ENCODE measurements at regions of chr10 and their contacts with region 1.

Region 1: DNA sequence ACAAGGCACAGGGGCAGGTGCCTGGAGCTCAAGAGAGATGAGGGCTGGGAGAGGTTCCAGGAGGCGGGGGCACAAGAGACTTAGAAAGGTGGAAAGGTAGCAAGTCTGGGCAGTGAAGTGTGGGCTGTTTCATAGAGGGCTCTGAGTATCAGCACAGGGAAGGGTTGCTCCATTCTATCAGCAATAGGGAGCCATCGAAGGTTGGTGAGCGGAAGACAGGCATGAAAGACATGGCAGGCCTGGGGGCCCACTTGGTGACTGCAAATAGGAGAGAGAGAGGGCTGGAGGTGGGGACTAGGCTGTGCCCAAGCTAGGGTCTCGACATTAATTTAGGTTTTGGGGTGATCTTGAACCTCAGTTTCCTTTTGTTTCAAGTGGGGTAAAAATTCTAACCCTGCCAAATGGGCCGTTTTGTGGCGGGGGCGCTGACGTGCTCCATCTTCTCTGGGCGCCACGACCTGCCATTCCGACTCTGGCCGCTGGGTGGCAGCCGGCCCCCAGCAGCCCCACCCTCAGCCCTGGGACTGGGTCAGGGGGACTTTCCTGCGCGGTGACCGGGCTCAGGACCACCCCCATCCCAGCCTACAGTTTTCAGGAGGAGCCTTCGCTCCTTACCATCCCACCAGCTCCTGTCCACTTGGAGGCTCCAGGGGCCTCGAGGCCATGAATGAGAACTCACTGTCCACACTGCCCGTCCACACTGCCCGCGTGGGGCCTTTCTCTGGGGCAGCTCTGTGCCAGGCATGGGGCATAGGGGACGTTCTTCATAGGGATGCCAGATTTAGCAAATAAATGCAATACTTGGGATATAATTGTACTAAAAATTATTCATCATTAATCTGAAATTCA is 37.2 kb upstream of the PCBD1 start:
- DNase-seq: peak in 4 of 5 donors; percentile 11 to 36 (median 18)
- H3K4me3 ChIP-seq: no peak overlapping the region
- H3K4me3 Mint-ChIP-seq: peak overlapping the region in 3 of 8 donors; percentile 14 to 60 (median 48)
- H3K27ac ChIP-seq: no peak overlapping the region
- H3K27ac Mint-ChIP-seq: no peak overlapping the region
- H3K4me1 ChIP-seq: no peaks in the 10 kb centered on the region
- H3K4me1 Mint-ChIP-seq: peaks cover 0 to 6% (median 5%) of the 10 kb centered on the region in 4 donors
- H3K27me3 ChIP-seq: peaks cover 8% of the 10 kb centered on the region
- H3K27me3 Mint-ChIP-seq: peaks cover 3 to 18% of the 10 kb centered on the region in 2 donors

Region 2: DNA sequence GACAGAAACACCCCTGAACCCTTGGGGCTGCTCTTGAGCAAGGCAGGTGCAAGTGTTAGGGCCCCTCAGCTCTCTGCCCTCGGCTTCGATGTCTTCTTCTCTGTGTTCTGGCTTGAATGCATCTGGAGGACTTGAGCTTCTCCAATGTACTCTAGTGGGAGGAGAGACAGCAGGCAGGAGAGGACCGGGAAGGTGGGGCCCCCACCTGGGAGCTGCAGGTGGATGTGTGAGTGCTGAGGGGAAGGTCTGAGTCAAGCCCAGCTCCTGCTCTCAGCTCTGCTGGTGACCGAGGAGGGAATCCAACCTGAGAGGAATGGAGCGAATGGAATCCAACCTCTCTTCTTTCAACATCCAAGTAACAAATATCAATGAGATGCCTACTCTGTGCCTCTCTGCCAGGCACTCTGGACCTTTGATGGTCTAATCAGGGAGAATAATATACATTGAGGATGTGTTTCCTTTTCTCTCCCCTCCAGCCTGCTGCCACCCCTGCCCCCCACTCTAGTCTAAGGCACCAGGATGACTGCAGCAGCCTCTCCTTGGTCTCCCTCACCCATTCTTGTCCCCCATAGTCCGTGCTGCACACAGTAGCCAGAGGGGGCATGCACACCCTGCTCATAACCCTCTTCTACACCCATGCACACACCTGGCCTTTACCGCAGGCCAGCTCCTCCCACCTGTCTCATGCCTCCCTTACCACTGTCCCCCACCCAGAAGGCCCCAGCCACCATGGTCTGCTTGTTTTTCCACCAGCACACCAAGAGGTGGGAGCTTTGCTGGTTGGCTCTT is 154.1 kb before region 1 on chr10:
- CTCF ChIA-PET with region 1: no interaction called
- POLR2A ChIA-PET with region 1: no interaction called
- intact Hi-C with region 1: no loop called
- DNase-seq: no peak
- H3K4me3 ChIP-seq: no peak overlapping the region
- H3K4me3 Mint-ChIP-seq: no peak overlapping the region
- H3K27ac ChIP-seq: no peak overlapping the region
- H3K27ac Mint-ChIP-seq: peak overlapping the region in 1 of 7 donors; percentile 5
- H3K4me1 ChIP-seq: no peaks in the 10 kb centered on the region
- H3K4me1 Mint-ChIP-seq: no peaks in the 10 kb centered on the region
- H3K27me3 ChIP-seq: no peaks in the 10 kb centered on the region
- H3K27me3 Mint-ChIP-seq: peaks cover 0 to 4% of the 10 kb centered on the region in 2 donors

Region 3: GRCh38 chr10:70913191-70913892 is 12.3 kb before region 1 on chr10:
- CTCF ChIA-PET with region 1: no interaction called
- POLR2A ChIA-PET with region 1: no interaction called
- intact Hi-C with region 1: no loop called
- DNase-seq: no peak
- H3K4me3 ChIP-seq: no peak overlapping the region
- H3K4me3 Mint-ChIP-seq: no peak overlapping the region
- H3K27ac ChIP-seq: no peak overlapping the region
- H3K27ac Mint-ChIP-seq: peak overlapping the region in 1 of 7 donors; percentile 35
- H3K4me1 ChIP-seq: no peaks in the 10 kb centered on the region
- H3K4me1 Mint-ChIP-seq: no peaks in the 10 kb centered on the region
- H3K27me3 ChIP-seq: no peaks in the 10 kb centered on the region
- H3K27me3 Mint-ChIP-seq: peaks cover 9 to 18% of the 10 kb centered on the region in 2 donors

Region 4: GRCh38 chr10:70935631-70936030 is 10.0 kb after region 1 on chr10:
- CTCF ChIA-PET with region 1: interaction called, 12 read pairs
- POLR2A ChIA-PET with region 1: no interaction called
- intact Hi-C with region 1: no loop called
- DNase-seq: no peak
- H3K4me3 ChIP-seq: no peak overlapping the region
- H3K4me3 Mint-ChIP-seq: no peak overlapping the region
- H3K27ac ChIP-seq: no peak overlapping the region
- H3K27ac Mint-ChIP-seq: no peak overlapping the region
- H3K4me1 ChIP-seq: no peaks in the 10 kb centered on the region
- H3K4me1 Mint-ChIP-seq: no peaks in the 10 kb centered on the region
- H3K27me3 ChIP-seq: no peaks in the 10 kb centered on the region
- H3K27me3 Mint-ChIP-seq: peaks cover 5 to 7% of the 10 kb centered on the region in 2 donors

Measured in CD4-positive, alpha-beta memory T cell (primary cell).